H1 (cell line): ENCODE measurements at regions of chr1 and their contacts with region 1.

Region 1: DNA sequence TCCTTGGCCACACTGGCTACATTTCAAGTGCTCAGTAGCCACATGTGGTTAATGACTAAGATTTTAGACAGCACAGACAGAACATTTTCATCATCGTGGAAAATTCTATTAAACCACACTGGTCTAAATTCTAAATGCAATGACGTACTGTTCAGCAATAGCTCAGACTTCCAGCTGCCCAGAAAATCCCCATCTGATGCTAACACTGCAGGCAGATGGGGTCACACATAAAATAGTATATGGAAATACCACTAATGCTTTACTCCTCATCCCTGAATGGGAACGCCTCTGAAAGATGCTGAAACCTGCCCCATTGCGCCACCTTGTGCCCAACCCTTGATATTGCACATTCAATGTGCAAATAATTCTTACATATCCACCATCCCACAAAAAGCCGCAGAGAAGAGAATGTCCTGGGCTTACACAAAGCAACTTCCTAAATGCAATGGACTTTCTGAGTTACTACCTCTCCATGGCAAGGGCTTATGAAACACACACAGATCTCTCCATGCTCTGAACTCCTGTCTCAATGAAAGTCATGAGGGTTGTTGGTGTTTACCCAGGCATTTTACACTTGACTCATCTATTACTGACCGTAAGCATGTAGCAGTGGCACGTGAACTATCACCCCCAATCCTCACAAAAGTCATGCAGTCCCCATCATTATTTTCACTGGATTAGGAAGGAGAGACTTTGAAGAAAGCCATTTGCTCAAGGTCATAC is 20.3 kb upstream of the SLC5A9 start:
- DNase-seq: peak in 1 of 2 experiments; percentile 84
- H3K4me3 ChIP-seq: no peak overlapping the region
- H3K27ac ChIP-seq: no peak overlapping the region
- H3K4me1 ChIP-seq: peaks cover 0 to 2% (median 0%) of the 10 kb centered on the region in 4 experiments; a peak in 1 of 7 replicates
- H3K27me3 ChIP-seq: no peaks in the 10 kb centered on the region; a peak in 1 of 7 replicates
- CTCF ChIP-seq: peak; percentile 53 to 84 (median 82)
- EP300 ChIP-seq: no peak
- POLR2A ChIP-seq: no peak
- RAD21 ChIP-seq: peak; percentile 85 to 89

Region 2: GRCh38 chr1:47948126-47948525 is 254.1 kb before region 1 on chr1:
- CTCF ChIA-PET with region 1: interaction called, 18 read pairs
- POLR2A ChIA-PET with region 1: no interaction called
- DNase-seq: peak in 1 of 2 experiments; percentile 27
- H3K4me3 ChIP-seq: no peak overlapping the region
- H3K27ac ChIP-seq: no peak overlapping the region
- H3K4me1 ChIP-seq: no peaks in the 10 kb centered on the region
- H3K27me3 ChIP-seq: peaks cover 0 to 3% (median 0%) of the 10 kb centered on the region in 4 experiments; a peak in 3 of 7 replicates
- CTCF ChIP-seq: peak; percentile 48 to 82 (median 73)
- EP300 ChIP-seq: peak in 1 of 2 experiments; percentile 26; a peak in 1 of 3 replicates
- POLR2A ChIP-seq: no peak
- RAD21 ChIP-seq: peak; percentile 87 to 90

Region 3: GRCh38 chr1:48109390-48110013 is 92.7 kb before region 1 on chr1:
- CTCF ChIA-PET with region 1: interaction called, 121 read pairs
- POLR2A ChIA-PET with region 1: no interaction called
- DNase-seq: no peak
- H3K4me3 ChIP-seq: no peak overlapping the region
- H3K27ac ChIP-seq: no peak overlapping the region
- H3K4me1 ChIP-seq: peaks cover 0 to 4% (median under 1%) of the 10 kb centered on the region in 4 experiments; a peak in 1 of 7 replicates
- H3K27me3 ChIP-seq: no peaks in the 10 kb centered on the region
- CTCF ChIP-seq: peak in 2 of 3 experiments; percentile 81 to 87; a peak in 3 of 4 replicates
- EP300 ChIP-seq: no peak
- POLR2A ChIP-seq: no peak
- RAD21 ChIP-seq: peak; percentile 94 to 96

Region 4: GRCh38 chr1:48127735-48128685 is 74.2 kb before region 1 on chr1:
- CTCF ChIA-PET with region 1: interaction called, 10 read pairs
- POLR2A ChIA-PET with region 1: no interaction called
- DNase-seq: no peak
- H3K4me3 ChIP-seq: no peak overlapping the region
- H3K27ac ChIP-seq: no peak overlapping the region
- H3K4me1 ChIP-seq: no peaks in the 10 kb centered on the region
- H3K27me3 ChIP-seq: no peaks in the 10 kb centered on the region
- CTCF ChIP-seq: no peak
- EP300 ChIP-seq: no peak
- POLR2A ChIP-seq: no peak
- RAD21 ChIP-seq: no peak

Region 5: GRCh38 chr1:48227165-48228013 is 25.2 kb after region 1 on chr1:
- CTCF ChIA-PET with region 1: interaction called, 30 read pairs
- POLR2A ChIA-PET with region 1: no interaction called
- DNase-seq: no peak
- H3K4me3 ChIP-seq: no peak overlapping the region
- H3K27ac ChIP-seq: no peak overlapping the region
- H3K4me1 ChIP-seq: no peaks in the 10 kb centered on the region
- H3K27me3 ChIP-seq: peaks cover 0 to 1% (median 0%) of the 10 kb centered on the region in 4 experiments; a peak in 1 of 7 replicates
- CTCF ChIP-seq: no peak
- EP300 ChIP-seq: no peak
- POLR2A ChIP-seq: no peak
- RAD21 ChIP-seq: no peak